Panc1 (cell line): ENCODE measurements at regions of chr12 and their contacts with region 1.

Region 1: GRCh38 chr12:117587631-117588287 is 226.3 kb upstream of the NOS1 start:
- DNase-seq: peak; percentile 39
- ATAC-seq: peak; percentile 95
- H3K4me3 ChIP-seq: no peak overlapping the region
- H3K27ac ChIP-seq: no peak overlapping the region
- H3K4me1 ChIP-seq: no peaks in the 10 kb centered on the region; the same call in 1 of the 2 replicates
- H3K27me3 ChIP-seq: peaks cover 4% of the 10 kb centered on the region
- CTCF ChIP-seq: peak; percentile 94

Region 2: DNA sequence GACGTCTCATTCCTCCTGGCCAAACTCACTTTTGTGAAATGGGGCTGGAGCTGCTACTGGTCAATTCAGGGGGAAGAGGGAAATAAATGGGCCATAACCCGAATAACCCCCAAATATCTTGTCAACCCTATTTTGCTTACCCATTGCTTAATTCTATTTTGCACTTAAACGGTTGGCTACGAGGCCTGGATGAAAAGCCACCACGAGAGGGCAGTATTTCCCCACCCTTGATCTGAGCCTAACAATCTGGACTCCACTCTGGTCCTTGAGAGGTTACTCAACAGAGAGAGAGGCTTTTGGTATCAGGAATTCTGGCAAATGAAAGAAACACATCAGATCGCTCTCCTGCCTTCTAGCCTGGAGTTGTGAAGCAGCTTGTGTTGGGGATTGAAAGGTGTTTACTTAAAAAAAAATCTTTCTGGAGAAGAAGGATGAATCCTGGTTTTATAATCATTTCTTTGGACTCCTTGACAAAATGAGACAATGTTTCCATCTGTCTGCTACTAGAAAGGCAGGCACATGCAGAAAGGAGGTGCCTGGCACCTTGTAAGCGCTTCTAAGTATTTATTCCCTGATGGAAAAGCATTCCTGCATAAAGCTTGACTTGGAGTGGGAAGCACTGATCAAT is 375.1 kb before region 1 on chr12:
- CTCF ChIA-PET with region 1: no interaction called
- POLR2A ChIA-PET with region 1: no interaction called
- in situ Hi-C with region 1: no loop called
- intact Hi-C with region 1: loop called (anchors 5 kb)
- DNase-seq: peak; percentile 61
- ATAC-seq: peak; percentile 93
- H3K4me3 ChIP-seq: no peak overlapping the region
- H3K27ac ChIP-seq: no peak overlapping the region
- H3K4me1 ChIP-seq: no peaks in the 10 kb centered on the region
- H3K27me3 ChIP-seq: peaks cover 3% of the 10 kb centered on the region; the same call in 1 of the 2 replicates
- CTCF ChIP-seq: peak; percentile 92

Region 3: GRCh38 chr12:117236456-117237001 is 351.2 kb before region 1 on chr12:
- CTCF ChIA-PET with region 1: interaction called, 3 read pairs
- POLR2A ChIA-PET with region 1: no interaction called
- in situ Hi-C with region 1: no loop called
- intact Hi-C with region 1: loop called (anchors 10 kb)
- DNase-seq: peak; percentile 48
- ATAC-seq: peak; percentile 93
- H3K4me3 ChIP-seq: no peak overlapping the region
- H3K27ac ChIP-seq: no peak overlapping the region
- H3K4me1 ChIP-seq: no peaks in the 10 kb centered on the region
- H3K27me3 ChIP-seq: peaks cover 5% of the 10 kb centered on the region; the same call in 1 of the 2 replicates
- CTCF ChIP-seq: peak; percentile 91

Region 4: DNA sequence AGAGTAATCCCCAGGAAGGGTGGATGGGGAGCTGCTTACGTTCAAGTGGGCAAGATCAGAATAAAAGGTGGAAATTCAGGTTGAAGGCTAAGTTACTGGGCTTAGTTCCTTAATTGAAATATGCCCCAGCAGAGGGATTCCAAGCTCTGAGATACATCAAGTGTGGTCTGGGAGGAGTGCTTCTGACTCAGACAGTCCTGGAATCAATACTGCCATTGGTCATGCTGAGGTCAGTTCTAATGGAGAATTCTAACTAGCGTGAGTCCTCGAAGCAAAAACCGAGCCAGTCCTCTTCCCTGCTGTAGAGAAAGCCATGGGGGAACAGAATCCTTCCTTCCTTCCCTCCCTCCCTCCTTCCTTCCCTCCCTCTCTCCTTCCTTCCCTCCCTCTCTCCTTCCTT is 266.2 kb before region 1 on chr12:
- CTCF ChIA-PET with region 1: no interaction called
- POLR2A ChIA-PET with region 1: no interaction called
- in situ Hi-C with region 1: no loop called
- intact Hi-C with region 1: no loop called
- DNase-seq: no peak
- ATAC-seq: peak; percentile 71
- H3K4me3 ChIP-seq: no peak overlapping the region
- H3K27ac ChIP-seq: no peak overlapping the region
- H3K4me1 ChIP-seq: no peaks in the 10 kb centered on the region
- H3K27me3 ChIP-seq: peaks cover 13% of the 10 kb centered on the region; the same call in 1 of the 2 replicates
- CTCF ChIP-seq: no peak

Region 5: DNA sequence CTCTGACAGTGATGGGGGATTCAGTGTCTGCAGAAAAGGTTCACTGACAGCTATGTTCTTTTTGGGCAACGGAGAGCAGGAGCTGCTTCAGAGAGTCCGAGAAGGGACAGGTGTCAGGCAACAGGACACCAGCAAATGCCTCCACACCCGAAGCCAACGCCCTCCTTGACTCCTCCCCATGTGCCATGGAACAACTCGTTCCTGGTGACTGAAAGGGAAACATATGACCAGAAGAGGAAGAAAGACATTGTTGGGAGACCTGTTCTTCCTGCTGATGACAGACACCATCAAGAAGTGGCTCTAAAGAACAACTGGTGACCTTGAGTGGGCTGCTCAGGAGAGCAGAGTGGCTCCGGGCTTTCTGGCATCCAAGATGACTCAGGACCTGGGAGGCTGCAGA is 54.1 kb before region 1 on chr12:
- CTCF ChIA-PET with region 1: no interaction called
- POLR2A ChIA-PET with region 1: no interaction called
- in situ Hi-C with region 1: loop called (anchors 5 kb)
- intact Hi-C with region 1: no loop called
- DNase-seq: no peak
- ATAC-seq: no peak
- H3K4me3 ChIP-seq: no peak overlapping the region
- H3K27ac ChIP-seq: no peak overlapping the region
- H3K4me1 ChIP-seq: no peaks in the 10 kb centered on the region
- H3K27me3 ChIP-seq: peaks cover 12% of the 10 kb centered on the region
- CTCF ChIP-seq: no peak